ENCODE measurements at regions of chr11 and their contacts with region 1.

Region 1: DNA sequence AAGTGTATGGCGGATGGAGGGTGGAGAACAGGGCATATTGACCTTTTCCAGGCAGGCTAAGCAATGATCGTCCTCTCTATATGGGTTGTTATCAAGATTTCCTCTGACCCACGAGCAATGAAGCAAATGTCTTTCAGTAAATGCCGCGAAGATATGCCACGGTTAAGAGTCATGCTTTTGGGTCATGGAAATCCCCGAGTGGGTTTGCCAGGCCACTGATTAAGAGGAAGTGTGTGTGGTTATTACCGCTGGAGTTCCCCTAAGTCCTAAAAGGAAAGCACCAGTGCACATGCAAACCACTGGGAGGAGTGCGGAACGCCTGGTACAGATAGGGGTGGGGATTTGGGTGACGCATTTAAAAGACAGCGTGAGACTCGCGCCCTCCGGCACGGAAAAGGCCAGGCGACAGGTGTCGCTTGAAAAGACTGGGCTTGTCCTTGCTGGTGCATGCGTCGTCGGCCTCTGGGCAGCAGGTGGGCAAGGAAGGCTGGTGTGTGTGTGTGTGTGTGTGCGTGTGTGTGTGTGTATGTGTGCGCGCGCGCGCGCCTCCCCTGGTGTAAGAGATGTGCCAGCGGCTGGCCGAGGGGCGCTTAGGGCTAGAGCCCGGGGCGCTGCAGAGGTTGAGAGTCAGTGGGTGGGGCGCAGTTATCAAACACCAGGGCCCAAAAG is at the start of gene BIRC3:
- DNase-seq: peak; percentile 97
- ATAC-seq: peak; percentile 88
- H3K4me3 ChIP-seq: peak within 1 kb of the TSS; percentile 66
- H3K27ac ChIP-seq: peak within 1 kb of the TSS; percentile 74
- H3K4me1 ChIP-seq: peaks cover 35% of the 10 kb centered on the region
- H3K27me3 ChIP-seq: no peaks in the 10 kb centered on the region
- CTCF ChIP-seq: no peak; the same call in 1 of the 2 replicates
- total RNA-seq, gene BIRC3: 3.9 and 4.2 TPM in 2 replicates

Region 2: GRCh38 chr11:101321222-101321621 is 996.0 kb before region 1 on chr11:
- CTCF ChIA-PET with region 1: no interaction called
- POLR2A ChIA-PET with region 1: no interaction called
- intact Hi-C with region 1: no loop called
- DNase-seq: peak; percentile 16
- ATAC-seq: no peak
- H3K4me3 ChIP-seq: no peak overlapping the region
- H3K27ac ChIP-seq: no peak overlapping the region
- H3K4me1 ChIP-seq: no peaks in the 10 kb centered on the region
- H3K27me3 ChIP-seq: peaks cover 19% of the 10 kb centered on the region
- CTCF ChIP-seq: peak; percentile 32; the same call in 1 of the 2 replicates

Region 3: DNA sequence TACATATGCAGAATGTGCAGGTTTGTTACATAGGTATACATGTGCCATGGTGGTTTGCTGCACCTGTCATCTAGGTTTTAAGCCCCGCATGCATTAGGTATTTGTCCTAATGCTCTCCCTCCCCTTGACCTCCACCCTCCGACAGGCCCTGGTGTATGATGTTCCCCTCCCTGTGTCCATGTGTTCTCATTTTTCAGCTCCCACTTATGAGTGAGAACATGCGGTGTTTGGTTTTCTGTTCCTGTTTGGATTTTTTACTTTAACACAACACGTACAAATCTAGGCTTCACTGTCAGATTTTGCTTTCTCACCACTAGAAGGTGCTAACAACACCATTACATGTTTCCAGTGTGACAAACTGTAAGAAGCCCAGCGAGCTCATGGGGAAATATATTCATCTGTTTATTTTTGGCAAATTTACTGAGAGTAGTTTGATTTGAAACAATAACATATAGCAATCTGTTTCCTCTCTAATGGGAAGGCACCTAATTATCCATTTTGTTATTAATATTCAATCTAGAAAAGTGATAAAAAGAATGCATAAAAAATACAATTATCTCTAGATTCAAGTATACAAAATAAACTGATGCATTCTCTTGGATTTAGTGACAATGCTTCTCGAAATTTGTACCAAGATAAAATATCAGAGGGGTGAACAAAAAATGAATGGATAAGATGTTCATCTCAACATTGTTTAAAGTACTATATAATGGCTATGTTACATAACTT is 23.2 kb before region 1 on chr11:
- CTCF ChIA-PET with region 1: interaction called, 3 read pairs
- POLR2A ChIA-PET with region 1: no interaction called
- intact Hi-C with region 1: loop called (anchors 1 kb)
- DNase-seq: peak; percentile 80
- ATAC-seq: peak; percentile 49
- H3K4me3 ChIP-seq: no peak overlapping the region
- H3K27ac ChIP-seq: no peak overlapping the region
- H3K4me1 ChIP-seq: peaks cover 25% of the 10 kb centered on the region
- H3K27me3 ChIP-seq: no peaks in the 10 kb centered on the region
- CTCF ChIP-seq: peak; percentile 82

Region 4: GRCh38 chr11:102306048-102306585 is 11.1 kb before region 1 on chr11:
- CTCF ChIA-PET with region 1: interaction called, 5 read pairs
- POLR2A ChIA-PET with region 1: no interaction called
- intact Hi-C with region 1: loop called (anchors 1 kb)
- DNase-seq: peak; percentile 98
- ATAC-seq: peak; percentile 94
- H3K4me3 ChIP-seq: peak overlapping the region; percentile 55
- H3K27ac ChIP-seq: peak overlapping the region; percentile 87
- H3K4me1 ChIP-seq: peaks cover 37% of the 10 kb centered on the region
- H3K27me3 ChIP-seq: no peaks in the 10 kb centered on the region
- CTCF ChIP-seq: peak; percentile 63

Region 5: DNA sequence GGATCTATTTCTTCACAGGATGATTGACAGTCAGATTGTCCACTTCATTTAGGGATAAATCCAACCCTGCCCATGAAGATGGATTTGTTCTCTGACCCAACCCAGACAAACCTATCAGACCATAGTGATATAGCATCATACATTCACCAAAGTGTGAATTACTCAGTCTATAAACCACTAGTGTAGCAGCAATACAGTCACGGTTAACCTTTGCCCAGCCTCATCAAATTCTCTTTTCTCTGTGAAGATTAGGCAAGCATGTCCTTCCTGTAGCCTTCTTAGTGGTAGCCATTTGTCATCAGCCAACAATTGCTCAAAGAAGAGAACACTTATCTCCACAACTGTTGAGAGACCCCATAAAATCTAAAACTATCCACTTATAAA is 15.4 kb after region 1 on chr11:
- CTCF ChIA-PET with region 1: no interaction called
- POLR2A ChIA-PET with region 1: interaction called, 12 read pairs
- intact Hi-C with region 1: no loop called
- DNase-seq: no peak
- ATAC-seq: no peak
- H3K4me3 ChIP-seq: no peak overlapping the region
- H3K27ac ChIP-seq: no peak overlapping the region
- H3K4me1 ChIP-seq: no peaks in the 10 kb centered on the region
- H3K27me3 ChIP-seq: no peaks in the 10 kb centered on the region
- CTCF ChIP-seq: no peak

Region 6: DNA sequence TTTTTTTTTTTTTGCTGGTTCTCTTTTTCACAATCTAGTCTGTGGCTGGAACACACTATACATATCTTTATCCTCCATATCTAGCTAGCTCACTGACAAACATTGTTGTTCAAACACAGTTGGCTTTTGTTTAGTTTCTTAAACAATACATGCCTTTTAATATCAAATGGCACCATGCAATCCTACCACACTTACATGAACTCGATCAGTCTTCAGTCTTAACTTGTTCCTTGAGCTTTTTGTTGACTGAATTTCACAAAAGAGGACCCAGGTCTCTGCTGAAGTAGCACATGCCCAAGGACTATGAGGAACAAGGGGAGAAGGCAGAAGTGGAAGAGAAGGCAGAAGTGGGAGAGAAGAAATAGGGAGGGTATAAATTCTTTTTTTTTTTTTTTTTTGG is 109.8 kb after region 1 on chr11:
- CTCF ChIA-PET with region 1: no interaction called
- POLR2A ChIA-PET with region 1: interaction called, 15 read pairs
- intact Hi-C with region 1: no loop called
- DNase-seq: no peak
- ATAC-seq: no peak
- H3K4me3 ChIP-seq: no peak overlapping the region
- H3K27ac ChIP-seq: no peak overlapping the region
- H3K4me1 ChIP-seq: no peaks in the 10 kb centered on the region
- H3K27me3 ChIP-seq: no peaks in the 10 kb centered on the region
- CTCF ChIP-seq: no peak